Right ventricle myocardium inferior (tissue), 1 donor: ENCODE measurements at regions of chr19 and their contacts with region 1.

Region 1: DNA sequence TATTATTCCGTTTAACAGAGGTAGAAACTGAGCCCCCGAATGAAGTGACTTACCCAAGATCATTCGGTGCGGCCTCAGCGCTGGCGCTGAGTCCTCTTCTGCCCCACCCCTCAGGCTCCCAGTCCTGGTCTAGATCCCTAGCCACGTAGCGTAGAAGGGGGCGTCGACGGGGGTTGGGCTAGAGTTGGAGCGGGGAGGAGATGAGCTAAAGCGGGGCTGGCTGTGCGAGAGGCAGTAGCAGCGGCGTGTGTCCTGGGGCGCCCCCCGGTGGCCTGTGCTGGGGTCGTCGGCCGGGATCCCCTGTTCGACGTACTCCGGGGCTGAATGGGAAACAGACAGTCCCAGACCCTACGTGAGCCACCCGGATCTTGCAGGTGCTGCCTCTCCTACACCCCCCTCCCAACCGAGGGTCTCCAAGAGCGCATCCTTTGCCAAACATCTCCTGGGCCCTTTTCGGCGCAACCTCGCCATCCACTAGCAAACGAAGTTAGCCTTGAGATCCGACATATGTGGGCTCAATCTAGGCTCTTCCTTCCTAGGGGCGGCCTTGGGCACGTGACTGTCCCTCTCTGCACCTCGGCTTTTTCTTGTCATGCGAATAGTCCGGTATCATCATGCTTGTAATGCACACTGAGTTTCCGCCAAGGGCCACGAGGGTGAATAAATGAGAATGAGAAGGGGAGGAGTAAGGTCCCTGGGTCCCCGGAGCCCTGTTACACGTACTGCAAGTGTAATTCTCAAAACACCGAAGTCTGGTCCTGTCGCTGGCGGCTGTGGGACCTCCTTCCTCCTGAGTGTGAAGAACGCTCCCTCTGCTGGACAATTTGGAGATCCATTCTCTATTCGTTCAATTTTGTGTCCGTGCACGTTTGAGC is 47.7 kb downstream of the CYP4F22 start:
- DNase-seq: peak; percentile 93
- ATAC-seq: peak; percentile 92

Region 2: GRCh38 chr19:15091901-15092753 is 463.9 kb before region 1 on chr19:
- intact Hi-C with region 1: loop called (anchors 5 kb)
- DNase-seq: no peak
- ATAC-seq: no peak

Region 3: GRCh38 chr19:15161028-15161989 is 394.7 kb before region 1 on chr19:
- intact Hi-C with region 1: loop called (anchors 5 kb)
- DNase-seq: no peak
- ATAC-seq: no peak

Region 4: GRCh38 chr19:15177269-15178116 is 378.5 kb before region 1 on chr19:
- intact Hi-C with region 1: loop called (anchors 1 kb)
- DNase-seq: peak; percentile 93
- ATAC-seq: peak; percentile 89

Region 5: DNA sequence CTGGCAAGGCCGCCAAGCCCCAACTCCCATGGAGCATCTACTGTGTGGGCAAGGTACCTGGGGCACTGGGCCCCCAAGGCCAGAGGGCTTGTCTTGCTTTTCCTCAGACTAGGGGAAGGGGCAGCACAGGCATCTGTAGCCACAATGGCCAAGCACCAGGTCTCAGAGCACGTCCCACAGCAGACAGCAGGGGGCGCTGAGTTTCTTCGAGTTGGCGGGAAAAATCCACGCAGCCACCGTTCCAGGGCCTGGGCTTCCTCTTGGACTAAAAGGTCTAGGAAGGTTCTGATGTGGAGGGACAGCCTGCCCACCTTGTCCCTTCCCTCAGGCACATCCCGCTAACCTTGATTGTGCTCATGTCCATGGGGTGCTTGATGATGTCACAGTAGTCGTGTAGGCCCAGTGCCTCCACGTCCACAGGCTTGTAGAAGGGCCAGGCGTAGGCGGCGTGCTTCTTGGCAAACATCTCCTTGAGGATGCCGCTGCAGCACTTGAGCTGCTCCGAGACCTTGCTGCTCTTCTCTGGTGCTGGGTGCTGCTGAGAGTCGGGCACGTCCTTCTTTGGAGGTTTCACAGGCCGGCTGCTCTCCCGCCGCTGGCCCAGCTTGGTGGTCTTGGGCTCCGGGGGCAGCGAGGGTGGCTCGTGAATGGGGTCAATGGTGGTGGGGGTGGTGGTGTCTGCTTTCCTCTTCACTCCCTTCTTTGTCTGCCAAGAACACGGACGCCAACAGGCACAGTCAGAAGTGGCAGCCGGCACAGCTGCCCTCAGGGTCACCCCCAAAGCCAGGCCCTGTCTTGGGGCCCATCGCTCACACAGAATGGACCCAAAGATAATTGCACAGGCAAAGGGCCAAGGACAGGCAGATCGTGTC is 291.7 kb before region 1 on chr19:
- intact Hi-C with region 1: loop called (anchors 2 kb)
- DNase-seq: no peak
- ATAC-seq: peak; percentile 33

Region 6: DNA sequence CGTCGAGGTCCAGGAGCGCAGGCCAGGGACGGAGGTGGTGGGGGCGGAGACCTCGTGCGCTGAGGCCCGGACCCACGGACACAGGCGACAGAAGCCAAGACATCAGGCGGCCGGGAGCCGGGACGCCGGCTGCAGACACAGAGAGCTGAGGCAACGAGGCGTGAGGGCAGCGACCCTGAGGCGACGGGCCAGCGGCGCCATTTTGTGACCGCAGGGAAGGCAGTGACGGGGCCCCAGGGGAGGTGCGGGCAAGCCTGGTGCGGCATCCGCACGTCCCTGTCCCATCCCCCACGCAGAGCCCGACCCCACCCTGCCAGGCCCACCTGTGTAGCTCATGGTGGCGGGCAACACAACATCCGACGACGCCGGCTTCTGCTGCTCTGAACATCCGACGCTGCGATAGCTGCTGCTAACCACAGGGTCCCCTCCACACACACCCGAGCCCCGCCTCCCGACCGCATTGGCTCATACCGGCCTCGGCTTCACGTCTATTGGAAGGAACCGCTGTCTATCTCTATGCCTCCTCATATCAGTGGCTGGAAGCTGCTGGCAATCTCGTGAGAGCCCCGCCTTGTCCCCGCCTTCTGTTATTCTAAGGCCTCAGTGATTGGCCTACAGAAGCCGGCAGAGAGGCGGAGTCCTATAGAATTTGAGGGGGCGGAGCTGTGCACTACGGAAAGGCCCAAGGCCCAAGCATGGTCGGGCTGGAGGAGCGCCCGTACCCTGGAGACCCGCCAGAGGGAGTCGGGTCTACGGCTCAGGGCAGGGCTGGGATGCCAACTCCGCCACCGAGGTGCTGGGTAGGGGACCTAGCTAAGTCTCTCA is 137.2 kb before region 1 on chr19 and contains the start of gene AKAP8L:
- intact Hi-C with region 1: loop called (anchors 1 kb)
- DNase-seq: peak; percentile 99
- ATAC-seq: peak; percentile 98
- total RNA-seq, gene AKAP8L: 76.7 TPM

Region 7: GRCh38 chr19:15449620-15450527 is 106.1 kb before region 1 on chr19 and contains the start of gene WIZ:
- intact Hi-C with region 1: loop called (anchors 10 kb)
- DNase-seq: peak; percentile 94
- ATAC-seq: peak; percentile 10
- total RNA-seq, gene WIZ: 31.3 TPM

Region 8: GRCh38 chr19:15614507-15615379 is 58.7 kb after region 1 on chr19 and contains the start of gene CYP4F8:
- intact Hi-C with region 1: no loop called
- DNase-seq: no peak
- ATAC-seq: no peak
- total RNA-seq, gene CYP4F8: not detected